ENCODE measurements at regions of chr4 and their contacts with region 1.

Region 1: GRCh38 chr4:39565878-39566600 is 38.8 kb upstream of the UGDH start:
- DNase-seq: no peak
- H3K4me3 ChIP-seq: no peak overlapping the region
- H3K27ac ChIP-seq: peak overlapping the region in 2 of 5 donors; percentile 58 to 66
- H3K4me1 ChIP-seq: no peaks in the 10 kb centered on the region
- H3K27me3 ChIP-seq: no peaks in the 10 kb centered on the region
- CTCF ChIP-seq: no peak
- POLR2A ChIP-seq: no peak

Region 2: GRCh38 chr4:39062094-39062769 is 503.8 kb before region 1 on chr4 and contains the start of gene KLHL5:
- intact Hi-C with region 1: no loop called
- DNase-seq: no peak
- H3K4me3 ChIP-seq: no peak within 1 kb of the TSS
- H3K27ac ChIP-seq: no peak within 1 kb of the TSS
- H3K4me1 ChIP-seq: peaks cover 14 to 17% of the 10 kb centered on the region in 2 donors
- H3K27me3 ChIP-seq: no peaks in the 10 kb centered on the region
- CTCF ChIP-seq: no peak
- POLR2A ChIP-seq: no peak
- total RNA-seq, gene KLHL5: 21.1 to 63.8 (median 37.9) TPM

Region 3: DNA sequence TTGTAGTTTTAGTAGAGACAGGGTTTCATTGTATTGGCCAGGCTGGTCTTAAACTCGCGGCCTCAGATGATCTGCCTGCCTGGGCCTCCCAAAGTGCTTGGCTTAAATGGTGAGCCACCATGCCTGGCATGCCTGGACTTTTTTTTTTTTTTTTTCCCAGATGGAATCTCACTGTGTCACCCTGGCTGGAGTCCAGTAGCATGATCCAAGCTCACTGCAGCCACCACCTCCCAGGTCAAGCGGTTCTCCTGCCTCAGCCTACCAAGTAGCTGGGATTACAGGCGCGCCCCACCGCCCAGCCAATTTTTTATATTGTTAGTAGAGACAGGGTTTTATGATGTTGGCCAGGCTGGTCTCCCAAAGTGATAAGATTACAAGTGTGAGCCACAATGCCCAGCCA is 140.3 kb after region 1 on chr4:
- intact Hi-C with region 1: no loop called
- DNase-seq: peak; percentile 68 to 89 (median 84)
- H3K4me3 ChIP-seq: no peak overlapping the region
- H3K27ac ChIP-seq: peak overlapping the region in 4 of 5 donors; percentile 15 to 85 (median 52)
- H3K4me1 ChIP-seq: peaks cover 16 to 38% of the 10 kb centered on the region in 2 donors
- H3K27me3 ChIP-seq: no peaks in the 10 kb centered on the region
- CTCF ChIP-seq: no peak
- POLR2A ChIP-seq: no peak

Region 4: GRCh38 chr4:39865280-39865679 is 299.2 kb after region 1 on chr4:
- intact Hi-C with region 1: loop called in 1 of 2 experiments (anchors 5 kb)
- DNase-seq: no peak
- H3K4me3 ChIP-seq: no peak overlapping the region
- H3K27ac ChIP-seq: no peak overlapping the region
- H3K4me1 ChIP-seq: peaks cover 0 to 4% of the 10 kb centered on the region in 2 donors
- H3K27me3 ChIP-seq: no peaks in the 10 kb centered on the region
- CTCF ChIP-seq: no peak
- POLR2A ChIP-seq: no peak

Measured in adrenal gland (tissue), 19 donors.